Mucosa of descending colon (tissue), 3 donors: ENCODE measurements at regions of chr3 and their contacts with region 1.

Region 1: GRCh38 chr3:51501833-51502561 is 2.2 kb upstream of the DCAF1 start:
- DNase-seq: peak; percentile 72 to 93 (median 88)
- ATAC-seq: peak; percentile 12
- H3K4me3 ChIP-seq: no peak overlapping the region
- H3K4me1 ChIP-seq: no peaks in the 10 kb centered on the region
- CTCF ChIP-seq: peak; percentile 93

Region 2: DNA sequence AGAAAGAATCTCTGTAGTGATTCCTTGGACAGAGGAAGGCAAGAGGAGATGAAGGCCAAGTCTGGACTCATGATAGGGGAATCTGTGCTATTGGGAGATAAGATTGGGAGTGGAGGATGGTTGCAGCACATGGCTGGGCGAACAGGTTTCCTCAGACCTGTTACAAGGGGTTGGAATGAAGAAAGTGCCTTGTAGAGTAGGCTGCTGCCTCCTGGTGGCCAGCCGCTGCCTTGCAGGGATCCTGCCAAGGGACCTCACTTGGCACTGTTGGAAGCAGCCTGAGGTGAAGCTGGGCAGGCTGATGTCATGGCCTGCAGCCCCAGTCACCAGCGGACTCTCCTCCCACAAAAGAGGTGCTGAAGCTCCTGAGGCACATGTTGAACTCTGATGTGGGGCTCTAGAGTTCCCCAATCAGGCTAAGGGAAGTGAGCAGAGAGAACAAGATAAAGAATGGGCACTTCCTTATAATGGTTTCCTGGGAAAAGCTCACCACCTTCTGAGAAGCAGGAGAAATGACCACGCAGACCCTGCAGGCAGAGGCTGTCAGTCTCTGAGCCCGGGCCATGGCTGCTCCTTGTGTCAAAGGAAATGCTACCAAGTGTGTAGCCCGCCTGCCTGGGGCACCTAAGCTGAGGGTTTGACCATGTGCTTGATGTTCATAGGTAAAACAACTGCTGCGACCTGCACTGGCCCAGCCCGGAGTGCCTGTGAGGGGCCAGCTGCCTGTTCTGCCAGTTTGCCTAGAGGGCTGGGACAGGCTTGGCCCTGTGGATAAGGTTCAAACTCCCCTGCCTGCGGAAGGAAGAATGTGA is 167.4 kb after region 1 on chr3:
- intact Hi-C with region 1: loop called (anchors 5 kb)
- DNase-seq: peak; percentile 89 to 98 (median 94)
- ATAC-seq: peak; percentile 68
- H3K4me3 ChIP-seq: no peak overlapping the region
- H3K4me1 ChIP-seq: peaks cover 29% of the 10 kb centered on the region
- CTCF ChIP-seq: peak; percentile 95